Common myeloid progenitor, CD34-positive (primary cell): ENCODE measurements at regions of chr19 and their contacts with region 1.

Region 1: GRCh38 chr19:11482384-11483050 is 1.7 kb upstream of the ELAVL3 start:
- DNase-seq: peak; percentile 91 to 96 (median 96)
- H3K4me3 ChIP-seq: peak overlapping the region in 4 of 7 experiments; percentile 11 to 51 (median 38)
- H3K27ac ChIP-seq: no peak overlapping the region
- H3K4me1 ChIP-seq: peaks cover 0 to 28% (median 20%) of the 10 kb centered on the region in 4 experiments
- H3K27me3 ChIP-seq: peaks cover 0 to 58% (median 18%) of the 10 kb centered on the region in 5 experiments

Region 2: DNA sequence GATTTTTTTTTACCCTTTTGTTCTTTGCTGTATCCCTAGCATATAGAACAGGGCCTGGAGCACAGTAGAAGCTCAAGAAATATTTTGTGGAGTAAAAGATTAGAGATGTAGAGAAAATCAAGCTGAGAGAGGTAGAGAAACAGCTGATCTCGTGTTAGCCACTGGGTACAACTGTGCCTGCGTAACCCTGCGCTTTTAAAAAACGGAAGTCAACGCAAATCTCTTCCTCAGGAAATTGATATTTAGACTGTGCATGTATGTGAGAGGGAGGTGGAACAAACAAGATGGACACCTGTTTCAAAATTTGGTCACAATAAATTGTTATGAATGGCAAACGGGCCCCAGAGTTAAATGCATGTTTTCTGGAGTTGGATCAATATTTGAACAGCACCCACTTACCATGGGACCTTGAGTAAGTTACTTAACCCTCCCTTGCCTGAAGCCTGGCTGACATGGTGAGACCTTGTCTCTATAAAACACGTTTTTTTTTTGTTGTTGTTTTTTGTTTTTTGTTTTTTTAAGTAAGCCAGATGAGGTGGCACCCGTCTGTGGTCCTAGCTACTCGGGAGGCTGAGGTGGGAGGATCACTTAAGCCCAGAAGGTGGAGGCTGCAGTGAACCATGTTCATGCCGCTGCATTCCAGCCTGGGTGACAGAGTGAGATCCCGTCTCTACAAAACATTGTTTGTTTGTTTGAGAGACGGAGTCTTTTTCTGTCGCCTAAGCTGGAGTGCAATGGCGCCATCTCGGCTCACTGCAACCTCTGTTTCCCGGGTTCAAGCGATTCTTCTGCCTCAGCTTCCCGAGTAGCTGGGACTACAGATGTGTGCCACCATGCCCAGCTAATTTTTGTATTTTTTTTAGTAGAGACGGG is 95.1 kb before region 1 on chr19:
- CTCF ChIA-PET with region 1: interaction called, 10 read pairs
- POLR2A ChIA-PET with region 1: no interaction called
- DNase-seq: peak in 2 of 3 donors; percentile 80 to 84
- H3K4me3 ChIP-seq: peak overlapping the region in 1 of 7 experiments; percentile 15
- H3K27ac ChIP-seq: no peak overlapping the region
- H3K4me1 ChIP-seq: peaks cover 4 to 30% (median 26%) of the 10 kb centered on the region in 4 experiments
- H3K27me3 ChIP-seq: peaks cover 0 to 4% (median 0%) of the 10 kb centered on the region in 5 experiments

Region 3: DNA sequence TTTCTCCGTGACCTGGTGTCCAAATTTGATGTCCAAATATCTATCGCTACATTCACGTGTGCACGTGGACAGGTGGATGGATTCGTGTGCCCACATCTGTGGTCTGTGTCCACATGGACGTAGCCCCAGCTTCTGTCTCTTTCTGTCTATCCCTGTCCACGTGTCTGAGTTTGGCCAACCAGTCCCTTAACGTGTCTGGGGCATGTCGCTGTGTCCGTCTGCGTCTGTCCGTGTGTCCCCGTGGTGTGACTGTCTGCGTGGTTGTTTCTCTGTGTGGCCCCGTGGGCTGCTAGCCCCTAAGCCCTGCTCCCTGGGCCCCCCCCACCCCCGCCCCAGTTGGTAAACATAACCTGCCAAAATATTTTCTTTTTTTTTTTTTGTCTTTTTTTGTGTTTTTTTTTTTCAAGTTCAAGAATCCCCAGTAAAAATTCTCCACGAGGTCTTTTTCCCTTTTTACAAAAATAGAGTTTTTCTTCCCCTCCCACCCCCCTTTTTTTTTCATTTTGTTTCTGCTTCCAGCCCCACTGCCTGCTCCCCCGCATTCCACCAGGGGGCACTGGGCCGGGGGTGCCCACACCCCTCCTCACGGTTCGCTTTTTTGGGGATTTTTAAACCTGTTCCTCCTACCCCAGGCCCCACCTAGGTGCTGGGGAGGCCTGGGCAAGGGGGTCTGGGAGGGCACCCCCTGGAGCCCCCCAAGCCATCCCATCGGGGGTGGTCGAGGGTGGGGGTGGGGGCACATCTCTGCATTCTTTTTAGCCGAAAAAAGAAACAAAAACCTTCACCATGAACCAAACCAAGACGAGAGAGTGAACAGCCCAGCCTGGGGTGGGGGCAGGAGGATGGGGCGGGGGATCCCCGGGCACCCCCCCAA is 28.8 kb before region 1 on chr19:
- CTCF ChIA-PET with region 1: interaction called, 11 read pairs
- POLR2A ChIA-PET with region 1: no interaction called
- DNase-seq: peak; percentile 38 to 60 (median 59)
- H3K4me3 ChIP-seq: no peak overlapping the region
- H3K27ac ChIP-seq: no peak overlapping the region
- H3K4me1 ChIP-seq: peaks cover 0 to 3% (median 2%) of the 10 kb centered on the region in 4 experiments
- H3K27me3 ChIP-seq: peaks cover 0 to 2% (median 0%) of the 10 kb centered on the region in 5 experiments

Region 4: GRCh38 chr19:11463391-11463790 is 19.1 kb before region 1 on chr19:
- CTCF ChIA-PET with region 1: interaction called, 11 read pairs
- POLR2A ChIA-PET with region 1: no interaction called
- DNase-seq: no peak
- H3K4me3 ChIP-seq: no peak overlapping the region
- H3K27ac ChIP-seq: no peak overlapping the region
- H3K4me1 ChIP-seq: no peaks in the 10 kb centered on the region
- H3K27me3 ChIP-seq: peaks cover 0 to 4% (median 0%) of the 10 kb centered on the region in 5 experiments